AG04449 (cell line): ENCODE measurements at regions of chr2 and their contacts with region 1.

Region 1: DNA sequence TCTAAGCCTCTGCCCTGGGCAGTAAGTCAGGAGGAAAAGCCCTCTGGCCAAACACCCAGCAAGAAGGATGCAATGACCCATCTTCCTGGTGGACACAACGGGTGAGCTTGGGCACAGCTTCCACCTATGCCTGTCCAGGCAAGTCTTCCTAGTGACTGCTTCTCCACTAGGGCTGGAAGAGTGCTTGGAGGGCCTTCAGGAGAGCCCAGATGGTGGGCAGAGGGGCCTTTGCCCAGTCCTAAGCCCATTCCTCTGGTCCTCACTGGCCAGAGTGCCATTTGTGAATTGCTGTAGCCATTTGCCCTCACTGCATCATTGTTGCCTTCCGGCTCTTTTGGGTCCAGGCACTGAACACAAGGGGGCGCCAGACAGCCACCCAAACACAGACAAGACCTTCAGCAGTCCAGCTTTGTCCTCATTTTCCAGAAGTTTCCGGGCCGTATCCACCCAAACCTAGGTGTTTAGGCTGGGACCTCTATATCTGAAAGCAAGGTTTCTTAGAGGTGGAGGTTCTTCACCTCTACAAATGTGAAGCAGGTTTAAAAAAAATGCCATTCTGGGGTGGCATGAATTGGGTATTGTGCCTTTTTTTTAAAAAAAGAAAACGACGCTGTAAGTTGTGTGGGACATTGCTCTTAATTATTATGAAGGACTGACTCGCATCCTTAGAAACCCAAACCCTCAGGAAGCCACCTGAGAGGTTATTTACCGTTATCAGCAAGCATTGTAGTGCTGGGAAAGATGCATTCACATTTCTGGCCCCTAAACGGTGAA is 29.5 kb downstream of the PAX8 start:
- DNase-seq: no peak
- H3K4me3 ChIP-seq: no peak overlapping the region
- CTCF ChIP-seq: peak; percentile 91

Region 2: DNA sequence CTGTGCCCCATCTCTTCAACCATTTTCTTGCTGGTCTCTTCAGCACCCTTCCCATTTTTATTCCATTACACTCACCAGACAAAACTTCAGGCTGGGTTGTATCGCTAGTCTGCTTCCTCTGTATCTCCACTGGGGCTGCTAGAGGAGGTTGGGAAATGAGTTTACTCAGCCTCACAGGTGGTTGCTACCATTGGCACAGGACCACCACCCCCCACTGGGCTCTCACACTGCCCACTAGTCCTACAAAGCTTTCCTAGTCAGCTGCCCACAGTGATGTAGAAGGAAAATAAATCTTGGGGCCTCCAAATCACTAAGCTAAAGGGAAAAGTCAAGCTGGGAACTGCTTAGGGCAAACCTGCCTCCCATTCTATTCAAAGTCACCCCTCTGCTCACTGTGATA is 400.4 kb before region 1 on chr2:
- CTCF ChIA-PET with region 1: no interaction called
- POLR2A ChIA-PET with region 1: no interaction called
- DNase-seq: no peak
- H3K4me3 ChIP-seq: no peak overlapping the region
- CTCF ChIP-seq: no peak

Region 3: DNA sequence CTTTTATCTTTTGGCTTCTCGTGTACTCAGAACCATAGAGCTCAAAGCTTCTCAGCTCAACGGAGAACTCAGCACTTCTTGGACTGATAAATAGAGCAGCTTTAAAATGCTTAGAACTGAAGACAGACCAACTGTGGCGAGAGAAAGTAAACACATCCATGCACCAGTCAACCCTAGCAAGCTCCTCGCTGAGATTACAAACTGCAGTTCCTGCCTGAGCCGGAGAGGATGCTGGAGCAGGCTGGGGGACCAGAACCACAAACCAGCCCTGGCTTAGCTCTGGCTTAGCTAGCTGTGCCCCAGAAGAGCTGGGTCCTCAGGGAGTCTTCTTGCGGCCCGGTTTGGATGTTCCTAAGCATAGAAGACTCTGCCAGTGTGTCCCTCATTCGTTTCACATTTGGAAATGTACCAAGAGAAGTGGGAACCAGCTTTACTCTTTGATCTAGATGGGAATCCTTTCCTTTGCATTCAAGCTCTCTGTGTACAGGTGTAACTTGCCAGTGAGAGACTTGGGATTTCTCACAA is 23.9 kb after region 1 on chr2:
- CTCF ChIA-PET with region 1: interaction called, 26 read pairs
- POLR2A ChIA-PET with region 1: no interaction called
- DNase-seq: no peak
- H3K4me3 ChIP-seq: no peak overlapping the region
- CTCF ChIP-seq: peak; percentile 20

Region 4: DNA sequence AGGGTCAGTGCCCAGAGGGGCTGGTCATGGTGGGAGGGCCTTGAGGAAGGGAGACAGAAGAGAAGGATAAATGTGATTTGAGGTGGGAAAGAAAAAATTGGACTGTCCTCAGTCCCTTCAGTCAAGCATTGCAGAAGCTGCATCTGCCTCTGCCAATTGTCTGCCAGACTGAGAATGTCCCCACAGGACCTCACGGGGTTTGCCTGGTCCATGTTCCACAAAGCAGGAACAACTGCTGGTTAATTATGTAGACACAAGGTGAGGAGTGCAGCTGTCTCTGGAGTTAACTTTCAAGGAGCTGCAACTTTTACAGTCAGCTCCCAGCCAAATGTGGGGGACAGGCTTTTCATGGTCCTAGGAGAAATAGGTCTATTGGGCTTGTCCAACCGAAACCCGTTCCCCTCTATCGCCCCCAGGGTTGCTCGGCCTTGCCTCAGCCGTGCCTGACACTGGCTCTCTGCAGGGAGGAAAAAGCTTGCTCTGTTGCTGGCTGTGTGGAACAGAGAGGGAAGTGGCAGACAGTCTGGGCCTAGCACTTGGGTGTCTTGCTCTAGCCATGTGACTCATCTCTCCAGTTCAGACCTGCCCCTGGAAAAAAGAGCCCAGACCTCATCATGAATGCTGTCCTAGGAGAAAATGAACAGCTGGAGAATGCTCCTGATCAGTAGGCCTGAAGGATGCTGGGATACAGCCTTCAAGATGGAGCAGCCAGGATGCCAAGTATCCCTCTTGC is 60.6 kb after region 1 on chr2:
- CTCF ChIA-PET with region 1: no interaction called
- POLR2A ChIA-PET with region 1: no interaction called
- DNase-seq: no peak
- H3K4me3 ChIP-seq: no peak overlapping the region
- CTCF ChIP-seq: no peak

Region 5: GRCh38 chr2:113376913-113377445 is 127.8 kb after region 1 on chr2:
- CTCF ChIA-PET with region 1: interaction called, 152 read pairs
- POLR2A ChIA-PET with region 1: no interaction called
- DNase-seq: no peak
- H3K4me3 ChIP-seq: no peak overlapping the region
- CTCF ChIP-seq: no peak